AG04449 (cell line): ENCODE measurements at regions of chr15 and their contacts with region 1.

Region 1: GRCh38 chr15:69244798-69245197 is 53.9 kb upstream of the PAQR5 start:
- DNase-seq: no peak
- H3K4me3 ChIP-seq: no peak overlapping the region
- CTCF ChIP-seq: no peak

Region 2: DNA sequence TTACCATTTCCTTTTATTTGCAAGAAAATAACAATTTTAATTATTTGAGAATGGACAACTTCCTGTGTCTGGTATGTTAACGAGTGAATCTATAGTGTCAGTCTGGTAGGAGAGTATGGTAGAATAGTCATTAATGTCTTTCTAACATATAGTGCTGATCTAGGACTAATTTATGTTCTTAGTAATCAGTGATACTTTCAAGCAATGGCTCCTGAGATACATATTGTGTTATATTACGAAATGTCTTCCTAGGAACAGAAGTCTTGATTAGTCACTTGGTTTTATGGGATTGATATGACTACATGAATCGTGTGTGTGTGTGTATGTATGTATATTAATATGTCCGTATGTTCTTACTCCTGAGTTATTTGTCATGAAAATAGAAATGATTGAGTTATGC is 12.7 kb before region 1 on chr15:
- CTCF ChIA-PET with region 1: interaction called, 10 read pairs
- POLR2A ChIA-PET with region 1: no interaction called
- DNase-seq: no peak
- H3K4me3 ChIP-seq: no peak overlapping the region
- CTCF ChIP-seq: no peak